ENCODE measurements at regions of chr7 and their contacts with region 1.

Region 1: GRCh38 chr7:116929914-116930913 is 23.1 kb upstream of the ST7 start:
- DNase-seq: peak; percentile 76
- CTCF ChIP-seq: peak; percentile 90

Region 2: GRCh38 chr7:116918704-116919103 is 11.5 kb before region 1 on chr7:
- CTCF ChIA-PET with region 1: interaction called, 65 read pairs
- POLR2A ChIA-PET with region 1: no interaction called
- DNase-seq: no peak
- CTCF ChIP-seq: no peak

Region 3: GRCh38 chr7:116942504-116942903 is 12.3 kb after region 1 on chr7:
- CTCF ChIA-PET with region 1: interaction called, 33 read pairs
- POLR2A ChIA-PET with region 1: no interaction called
- DNase-seq: no peak
- CTCF ChIP-seq: no peak

Region 4: DNA sequence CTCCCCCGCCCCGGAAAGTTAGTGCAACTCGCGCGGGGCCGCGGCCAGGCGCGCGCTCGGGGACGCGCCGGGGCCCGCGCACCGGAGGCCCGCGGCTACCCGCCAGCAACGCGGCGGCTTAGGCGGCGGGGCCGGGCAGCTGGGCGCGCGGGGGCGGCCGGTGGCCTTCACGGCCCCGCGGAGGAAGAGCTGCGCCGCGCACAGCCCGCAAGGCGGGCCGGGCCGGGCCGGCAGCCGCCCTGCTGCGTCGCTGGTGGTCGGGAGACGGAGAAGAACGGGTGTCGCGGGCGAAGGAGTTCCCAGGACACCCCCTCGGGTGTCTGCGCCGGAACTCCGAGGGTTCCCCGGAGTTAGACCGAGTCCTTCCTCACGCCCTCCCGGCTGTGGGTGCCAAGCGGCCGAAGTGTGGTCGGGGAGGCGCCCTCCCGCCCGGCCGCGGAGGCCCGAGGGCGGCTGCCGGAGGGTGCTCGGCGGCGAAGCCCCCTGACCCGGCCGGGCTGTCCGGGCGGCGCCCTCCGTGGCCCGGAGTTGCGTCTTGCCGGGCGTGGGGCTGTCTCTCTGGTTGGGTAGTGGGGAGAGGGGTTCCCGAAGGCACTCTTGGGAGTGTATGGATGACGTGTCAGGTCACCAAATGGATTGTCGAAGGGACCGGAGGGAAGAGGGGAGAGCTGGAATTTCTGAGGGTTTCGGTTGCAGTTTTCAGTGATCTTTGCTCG is 23.7 kb after region 1 on chr7:
- CTCF ChIA-PET with region 1: interaction called, 12 read pairs
- POLR2A ChIA-PET with region 1: no interaction called
- DNase-seq: peak; percentile 77
- CTCF ChIP-seq: no peak

Region 5: GRCh38 chr7:117014673-117015133 is 84.5 kb after region 1 on chr7:
- CTCF ChIA-PET with region 1: interaction called, 20 read pairs
- POLR2A ChIA-PET with region 1: no interaction called
- DNase-seq: peak; percentile 51
- CTCF ChIP-seq: no peak

Region 6: DNA sequence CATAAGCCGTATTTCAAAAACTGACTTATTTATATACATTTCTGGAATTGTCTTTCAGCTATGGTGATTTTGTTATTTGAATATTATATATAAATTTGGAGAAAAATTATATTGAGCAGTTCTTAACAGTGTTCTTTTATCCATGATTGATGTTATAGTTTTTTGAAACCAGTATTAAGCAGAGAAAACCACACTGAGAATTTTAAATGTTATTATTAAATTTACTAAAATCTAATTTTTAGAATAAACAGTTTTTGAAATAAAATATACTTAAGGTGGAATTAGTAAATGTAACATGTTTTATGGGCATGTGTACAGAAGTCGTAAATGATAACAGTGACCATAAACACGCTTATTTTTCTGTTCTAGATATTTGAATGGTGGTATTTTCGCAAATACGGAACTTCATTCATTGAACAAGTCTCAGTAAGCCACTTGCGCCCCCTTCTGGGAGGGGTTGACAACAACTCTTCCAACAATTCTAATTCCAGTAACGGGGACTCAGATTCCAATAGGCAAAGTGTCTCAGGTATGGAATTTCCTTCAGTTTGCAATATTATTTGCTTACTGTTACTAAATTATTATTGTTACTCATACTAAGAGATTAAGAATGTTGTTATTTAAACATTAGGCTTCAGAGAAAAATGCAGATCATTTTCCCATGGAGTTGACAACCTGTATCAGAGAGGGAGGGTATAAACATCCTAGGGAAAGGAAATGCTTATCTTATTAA is 189.1 kb after region 1 on chr7:
- CTCF ChIA-PET with region 1: interaction called, 166 read pairs
- POLR2A ChIA-PET with region 1: no interaction called
- DNase-seq: peak; percentile 18
- CTCF ChIP-seq: peak; percentile 73